PC-9 (cell line): ENCODE measurements at regions of chr21 and their contacts with region 1.

Region 1: GRCh38 chr21:35138665-35139381 is 89.7 kb upstream of the RUNX1 start:
- DNase-seq: peak; percentile 74 to 95
- H3K4me3 ChIP-seq: peak overlapping the region; percentile 7; the same call in 1 of the 2 replicates
- H3K27ac ChIP-seq: peak overlapping the region; percentile 99
- H3K4me1 ChIP-seq: peaks cover 53% of the 10 kb centered on the region
- H3K27me3 ChIP-seq: no peaks in the 10 kb centered on the region
- CTCF ChIP-seq: no peak

Region 2: DNA sequence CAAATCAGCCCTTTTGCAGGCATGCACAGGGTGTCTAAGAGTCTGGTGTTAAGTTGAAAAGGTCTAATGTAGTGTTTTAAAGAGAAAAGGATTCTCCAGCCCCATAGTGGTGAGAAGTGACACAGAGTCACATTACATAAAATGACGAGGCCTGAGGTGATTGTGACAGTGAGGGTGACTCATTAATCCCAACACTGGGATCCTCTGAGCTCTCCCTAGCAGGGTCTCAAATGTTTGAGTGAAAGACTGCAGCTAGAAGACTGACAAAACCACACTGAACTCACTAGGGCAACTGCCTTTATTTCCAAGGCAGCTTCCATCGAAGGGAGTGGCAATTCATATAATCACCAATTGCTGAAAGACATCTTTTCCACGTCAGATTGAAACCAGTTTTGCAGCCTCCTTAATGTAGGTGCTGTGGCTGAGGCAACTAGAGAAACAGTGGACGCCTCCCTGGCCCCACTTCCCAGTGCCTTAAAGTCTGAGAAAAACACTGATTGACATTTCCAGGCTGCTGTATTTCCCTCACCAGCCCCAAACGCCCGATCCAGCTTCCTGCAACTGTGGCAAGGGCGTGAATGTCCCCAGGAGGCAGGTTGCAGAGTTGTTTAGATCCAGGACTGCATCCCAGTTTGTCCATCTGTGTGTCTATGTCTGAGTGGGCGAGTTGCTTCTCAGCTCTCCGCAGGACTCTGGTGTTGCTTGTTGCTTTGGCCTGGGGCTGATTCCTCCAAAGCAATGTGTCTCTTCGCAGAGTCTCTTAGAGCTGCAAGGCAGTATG is 171.1 kb before region 1 on chr21:
- CTCF ChIA-PET with region 1: no interaction called
- POLR2A ChIA-PET with region 1: no interaction called
- intact Hi-C with region 1: loop called (anchors 10 kb)
- DNase-seq: peak; percentile 60 to 87
- H3K4me3 ChIP-seq: no peak overlapping the region
- H3K27ac ChIP-seq: peak overlapping the region; percentile 92
- H3K4me1 ChIP-seq: peaks cover 54% of the 10 kb centered on the region
- H3K27me3 ChIP-seq: no peaks in the 10 kb centered on the region
- CTCF ChIP-seq: no peak

Region 3: DNA sequence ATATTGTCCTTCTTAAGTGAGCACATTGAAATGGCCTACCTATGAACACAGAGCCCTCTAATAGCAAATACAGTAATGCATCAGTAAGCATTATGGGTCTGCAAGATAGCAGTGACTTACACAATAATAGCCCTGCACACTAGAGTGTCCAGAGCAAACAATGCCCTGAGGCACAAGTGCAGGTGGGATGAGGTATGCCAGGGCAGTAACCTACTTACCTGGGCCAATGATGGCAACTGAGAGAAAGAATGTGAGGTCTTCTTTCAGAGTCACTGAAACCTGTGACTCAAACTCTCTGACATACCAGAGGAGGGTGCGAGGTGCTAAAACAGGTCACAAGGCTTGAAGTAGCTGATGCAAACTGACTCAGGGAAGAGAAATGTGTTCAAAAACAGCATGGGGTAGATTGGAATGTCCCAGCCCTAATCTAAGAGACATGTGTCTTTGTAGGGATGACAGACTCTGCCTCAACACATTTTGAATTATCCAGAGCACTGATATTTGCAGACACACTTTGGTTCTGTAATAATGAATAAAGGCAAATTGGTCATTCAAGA is 78.8 kb after region 1 on chr21:
- CTCF ChIA-PET with region 1: interaction called, 10 read pairs
- POLR2A ChIA-PET with region 1: no interaction called
- intact Hi-C with region 1: loop called (anchors 1 kb)
- DNase-seq: peak; percentile 88 to 100
- H3K4me3 ChIP-seq: no peak overlapping the region
- H3K27ac ChIP-seq: peak overlapping the region; percentile 100
- H3K4me1 ChIP-seq: peaks cover 55% of the 10 kb centered on the region
- H3K27me3 ChIP-seq: no peaks in the 10 kb centered on the region
- CTCF ChIP-seq: no peak

Region 4: DNA sequence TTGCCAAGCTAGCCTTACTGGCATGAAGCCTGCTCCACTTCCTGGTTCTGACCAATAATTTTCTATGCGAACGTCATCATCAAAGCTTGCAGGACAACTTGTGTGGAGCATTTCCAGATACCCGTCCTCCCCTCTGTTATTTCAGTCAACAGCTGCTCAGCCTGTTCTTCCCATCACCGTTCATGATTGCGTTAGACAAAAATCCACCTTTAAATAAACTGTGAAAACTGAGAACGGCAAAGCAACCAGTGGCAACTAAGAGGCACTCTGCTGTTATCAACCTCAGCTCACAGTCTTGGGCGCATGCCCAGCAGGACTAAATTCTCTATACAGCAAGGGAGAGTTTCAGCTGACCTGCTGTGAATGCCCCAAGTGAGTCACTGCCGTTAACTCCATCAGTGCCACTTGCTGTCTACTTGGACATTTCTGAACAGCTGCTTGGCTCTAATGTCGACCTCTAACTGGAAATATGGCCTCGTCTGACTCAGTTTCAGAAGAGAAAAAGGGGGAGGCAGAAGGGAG is 117.7 kb after region 1 on chr21:
- CTCF ChIA-PET with region 1: no interaction called
- POLR2A ChIA-PET with region 1: no interaction called
- intact Hi-C with region 1: loop called (anchors 2 kb)
- DNase-seq: peak; percentile 86 to 98
- H3K4me3 ChIP-seq: peak overlapping the region; percentile 42; the same call in 1 of the 2 replicates
- H3K27ac ChIP-seq: peak overlapping the region; percentile 99
- H3K4me1 ChIP-seq: peaks cover 37% of the 10 kb centered on the region
- H3K27me3 ChIP-seq: no peaks in the 10 kb centered on the region
- CTCF ChIP-seq: no peak

Region 5: DNA sequence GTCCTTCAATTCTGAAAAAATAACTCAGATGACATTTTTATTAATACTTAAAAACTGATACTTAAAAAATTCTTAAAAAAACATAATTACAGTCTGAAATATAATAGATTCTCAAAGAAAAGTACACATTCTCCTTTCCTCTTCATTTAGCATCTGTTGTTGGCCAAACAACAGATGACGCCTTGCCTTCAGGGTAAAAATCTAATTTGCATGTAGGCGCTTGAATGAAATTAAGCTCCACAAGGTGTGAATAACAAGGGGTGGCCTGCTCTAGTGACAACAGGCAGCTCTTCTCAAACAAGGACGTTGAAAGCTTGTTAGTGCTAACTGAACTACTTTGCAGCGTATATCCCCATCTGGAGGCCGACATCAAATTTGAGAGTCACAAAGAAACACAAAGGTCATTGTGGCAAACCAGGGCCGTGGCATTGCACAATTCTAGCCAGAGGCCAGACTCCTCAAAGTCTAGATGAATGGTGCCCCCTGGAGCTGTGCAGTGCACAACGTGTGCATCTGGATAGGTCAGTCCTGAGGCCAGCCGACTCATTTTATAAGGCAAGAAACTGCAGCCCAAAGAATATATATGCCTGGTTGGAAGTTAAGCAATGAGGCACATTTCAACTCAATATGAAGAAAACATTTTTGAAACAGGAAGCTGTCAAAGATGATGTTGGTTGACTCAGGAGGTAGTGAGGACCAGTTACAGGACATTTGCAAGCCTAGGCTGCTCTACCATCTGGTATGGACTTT is 369.5 kb after region 1 on chr21:
- CTCF ChIA-PET with region 1: no interaction called
- POLR2A ChIA-PET with region 1: no interaction called
- intact Hi-C with region 1: loop called (anchors 1 kb)
- DNase-seq: peak; percentile 61 to 85
- H3K4me3 ChIP-seq: no peak overlapping the region
- H3K27ac ChIP-seq: no peak overlapping the region; the same call in 1 of the 2 replicates
- H3K4me1 ChIP-seq: peaks cover 42% of the 10 kb centered on the region
- H3K27me3 ChIP-seq: no peaks in the 10 kb centered on the region
- CTCF ChIP-seq: peak; percentile 68